ENCODE measurements at regions of chr21 and their contacts with region 1.

Region 1: GRCh38 chr21:37675202-37675801 is 241.0 kb downstream of the KCNJ6 start:
- DNase-seq: peak; percentile 29 to 96
- H3K4me3 ChIP-seq: peak overlapping the region in 2 of 4 experiments; percentile 7 to 48; a peak in 3 of 8 replicates
- H3K27ac ChIP-seq: no peak overlapping the region
- H3K4me1 ChIP-seq: peaks cover 0 to 8% (median 2%) of the 10 kb centered on the region in 4 experiments; a peak in 3 of 7 replicates
- H3K27me3 ChIP-seq: no peaks in the 10 kb centered on the region; a peak in 2 of 7 replicates
- CTCF ChIP-seq: peak; percentile 81 to 94 (median 89)
- EP300 ChIP-seq: no peak
- POLR2A ChIP-seq: no peak
- RAD21 ChIP-seq: peak; percentile 71 to 76

Region 2: DNA sequence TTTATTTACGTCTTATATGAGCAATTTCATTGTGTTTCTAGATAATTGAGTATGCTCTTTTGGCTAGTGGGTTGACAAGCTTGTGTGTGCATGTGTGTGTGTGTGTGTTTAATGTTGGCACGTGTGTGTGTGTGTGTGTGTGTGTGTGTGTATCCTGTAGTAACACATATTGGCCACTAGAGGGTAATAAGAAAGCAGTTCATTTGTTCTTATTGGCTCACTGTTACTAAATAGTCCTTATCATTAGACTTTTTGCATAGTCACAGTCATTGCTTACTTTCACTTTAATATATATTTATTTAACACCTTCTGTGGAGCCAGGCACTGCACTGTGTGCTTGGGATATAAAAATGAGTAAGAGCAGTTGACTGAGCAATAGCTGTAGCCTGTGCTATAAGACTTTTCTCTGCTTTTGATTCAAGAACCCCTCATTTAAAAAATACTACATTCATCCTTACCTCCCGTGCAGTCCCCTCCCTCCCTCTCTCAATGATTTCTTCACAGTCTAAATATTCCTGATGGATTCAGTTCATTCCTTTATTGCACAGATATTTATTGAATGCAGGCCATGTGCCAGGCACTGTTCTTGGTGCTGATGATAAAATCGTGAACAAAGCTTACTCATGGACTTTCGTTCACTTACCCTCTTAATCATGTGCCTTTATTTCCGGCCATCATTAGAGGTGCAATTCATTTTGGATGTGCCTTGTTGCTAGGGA is 212.1 kb before region 1 on chr21:
- CTCF ChIA-PET with region 1: interaction called, 10 read pairs
- POLR2A ChIA-PET with region 1: no interaction called
- DNase-seq: no peak
- H3K4me3 ChIP-seq: no peak overlapping the region
- H3K27ac ChIP-seq: no peak overlapping the region; the same call in 1 of the 2 replicates
- H3K4me1 ChIP-seq: peaks cover 3 to 8% (median 7%) of the 10 kb centered on the region in 4 experiments; a peak in 5 of 7 replicates
- H3K27me3 ChIP-seq: no peaks in the 10 kb centered on the region
- CTCF ChIP-seq: peak in 2 of 3 experiments; percentile 40 to 71; a peak in 3 of 4 replicates
- EP300 ChIP-seq: no peak
- POLR2A ChIP-seq: no peak
- RAD21 ChIP-seq: peak; percentile 38 to 51

Region 3: DNA sequence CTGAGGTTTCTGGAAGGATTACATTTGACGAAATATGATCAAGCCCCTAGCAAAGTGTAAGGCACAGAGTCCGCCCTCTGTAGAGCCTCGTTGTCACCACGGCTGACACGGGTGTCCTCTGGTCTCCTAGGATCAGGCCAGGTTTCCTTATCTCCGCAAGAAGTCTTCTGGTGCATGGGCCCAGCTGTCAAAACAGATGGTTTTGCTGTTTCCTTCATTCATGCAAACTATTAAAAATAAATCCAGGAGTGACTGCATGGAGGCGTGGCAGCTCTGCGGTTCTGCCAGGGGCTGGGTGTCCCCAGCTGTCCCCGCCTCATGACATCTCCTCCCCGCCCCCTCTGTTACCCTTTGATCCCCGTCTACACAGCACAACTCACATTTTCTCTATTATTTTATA is 99.7 kb before region 1 on chr21:
- CTCF ChIA-PET with region 1: no interaction called
- POLR2A ChIA-PET with region 1: no interaction called
- DNase-seq: no peak
- H3K4me3 ChIP-seq: no peak overlapping the region
- H3K27ac ChIP-seq: no peak overlapping the region
- H3K4me1 ChIP-seq: no peaks in the 10 kb centered on the region
- H3K27me3 ChIP-seq: no peaks in the 10 kb centered on the region
- CTCF ChIP-seq: no peak
- EP300 ChIP-seq: no peak
- POLR2A ChIP-seq: no peak
- RAD21 ChIP-seq: no peak

Region 4: DNA sequence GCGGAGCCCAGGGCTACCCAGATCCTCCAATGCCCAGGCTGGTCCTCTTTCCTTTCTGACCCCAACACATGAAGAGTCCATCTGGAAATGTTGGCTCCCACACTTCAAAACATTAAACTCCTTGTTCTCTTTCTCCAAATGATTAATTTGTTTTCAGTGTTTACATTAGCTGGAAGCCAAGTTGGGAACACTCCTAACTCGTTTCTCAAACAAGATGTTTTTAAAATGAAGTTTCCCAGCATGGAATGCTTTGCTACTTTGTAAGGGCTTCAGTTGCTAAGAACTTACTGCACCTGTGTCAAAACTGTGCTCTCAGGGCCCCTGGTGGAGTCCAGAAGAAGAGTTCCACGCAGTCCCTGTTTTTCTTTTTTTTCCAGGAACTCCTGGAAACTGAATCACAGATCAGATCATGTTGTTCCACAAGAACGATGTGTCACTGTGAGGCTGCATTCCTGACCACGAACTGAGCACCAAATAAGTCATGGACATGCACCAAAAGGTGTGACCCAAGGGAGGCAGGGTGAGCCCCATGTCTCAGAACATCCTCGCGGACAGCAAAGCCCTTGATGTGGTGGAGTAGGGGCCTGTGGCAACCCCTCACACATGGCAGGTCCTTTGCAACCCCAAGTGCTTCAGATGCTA is 16.4 kb before region 1 on chr21:
- CTCF ChIA-PET with region 1: interaction called, 11 read pairs
- POLR2A ChIA-PET with region 1: interaction called, 5 read pairs
- DNase-seq: no peak
- H3K4me3 ChIP-seq: no peak overlapping the region
- H3K27ac ChIP-seq: no peak overlapping the region
- H3K4me1 ChIP-seq: no peaks in the 10 kb centered on the region
- H3K27me3 ChIP-seq: no peaks in the 10 kb centered on the region
- CTCF ChIP-seq: no peak
- EP300 ChIP-seq: no peak
- POLR2A ChIP-seq: no peak
- RAD21 ChIP-seq: peak in 1 of 2 experiments; percentile 15; a peak in 1 of 4 replicates

Region 5: GRCh38 chr21:37686991-37687810 is 11.9 kb after region 1 on chr21:
- CTCF ChIA-PET with region 1: interaction called, 13 read pairs
- POLR2A ChIA-PET with region 1: no interaction called
- DNase-seq: no peak
- H3K4me3 ChIP-seq: no peak overlapping the region
- H3K27ac ChIP-seq: no peak overlapping the region
- H3K4me1 ChIP-seq: peaks cover 2 to 8% (median 4%) of the 10 kb centered on the region in 4 experiments; a peak in 6 of 7 replicates
- H3K27me3 ChIP-seq: no peaks in the 10 kb centered on the region
- CTCF ChIP-seq: no peak
- EP300 ChIP-seq: no peak
- POLR2A ChIP-seq: no peak
- RAD21 ChIP-seq: no peak

Region 6: DNA sequence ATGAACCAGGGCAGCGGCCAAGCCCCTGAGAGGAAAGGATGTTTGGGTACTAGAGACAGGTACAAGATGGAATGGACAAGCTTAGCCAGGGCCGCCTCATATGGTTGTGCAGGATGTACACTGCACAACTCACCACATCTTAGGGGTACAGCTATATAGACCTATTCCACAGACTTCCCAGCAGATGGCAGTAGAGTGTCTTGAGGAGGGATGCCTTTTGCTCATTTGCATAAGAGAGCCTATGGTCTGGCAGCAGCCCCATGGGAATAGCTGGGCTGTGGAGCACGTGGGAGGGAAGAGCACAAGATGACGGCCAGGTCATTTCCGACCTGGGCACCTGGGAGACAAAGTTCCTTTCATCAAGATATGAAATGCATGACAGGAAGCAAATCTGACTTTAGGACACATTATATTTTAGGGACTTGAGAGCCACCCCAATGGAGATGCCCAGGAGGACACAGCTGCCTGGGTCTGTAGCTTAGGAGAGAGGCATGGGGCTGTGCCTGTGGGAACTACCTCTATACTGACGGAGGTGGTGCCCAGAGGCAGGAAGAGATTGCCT is 25.4 kb after region 1 on chr21:
- CTCF ChIA-PET with region 1: interaction called, 13 read pairs
- POLR2A ChIA-PET with region 1: no interaction called
- DNase-seq: peak; percentile 33 to 48
- H3K4me3 ChIP-seq: no peak overlapping the region
- H3K27ac ChIP-seq: no peak overlapping the region
- H3K4me1 ChIP-seq: no peaks in the 10 kb centered on the region
- H3K27me3 ChIP-seq: 0 out of 7 replicates have a peak, but pooled peaks cover 0 to 2% (median 0%) of the 10 kb centered on the region in 4 experiments
- CTCF ChIP-seq: peak; percentile 18 to 87 (median 71)
- EP300 ChIP-seq: no peak
- POLR2A ChIP-seq: no peak
- RAD21 ChIP-seq: peak; percentile 81 to 88

Region 7: GRCh38 chr21:37724201-37724600 is 48.9 kb after region 1 on chr21:
- CTCF ChIA-PET with region 1: no interaction called
- POLR2A ChIA-PET with region 1: no interaction called
- DNase-seq: no peak
- H3K4me3 ChIP-seq: no peak overlapping the region
- H3K27ac ChIP-seq: no peak overlapping the region
- H3K4me1 ChIP-seq: no peaks in the 10 kb centered on the region
- H3K27me3 ChIP-seq: no peaks in the 10 kb centered on the region
- CTCF ChIP-seq: no peak
- EP300 ChIP-seq: no peak
- POLR2A ChIP-seq: no peak
- RAD21 ChIP-seq: no peak

Region 8: DNA sequence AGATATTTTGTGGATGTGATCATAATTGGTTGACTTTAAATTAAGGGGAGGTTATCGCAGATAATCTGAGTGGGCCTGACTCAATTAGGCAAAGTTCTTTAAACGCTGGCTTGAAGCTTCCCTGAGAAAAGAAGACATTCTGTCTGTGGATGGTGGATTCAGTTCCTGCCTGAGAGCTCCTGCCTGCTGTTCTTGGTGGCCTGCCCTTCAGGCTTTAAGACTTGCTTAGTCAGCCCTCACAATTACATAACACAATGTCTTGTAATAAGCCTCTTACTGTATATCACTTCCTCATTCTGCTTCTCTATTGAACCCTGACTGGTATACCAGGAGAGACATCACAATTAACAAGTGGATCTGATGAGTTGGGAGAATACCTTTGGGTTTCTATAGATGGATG is 190.7 kb after region 1 on chr21:
- CTCF ChIA-PET with region 1: no interaction called
- POLR2A ChIA-PET with region 1: no interaction called
- DNase-seq: no peak
- H3K4me3 ChIP-seq: no peak overlapping the region
- H3K27ac ChIP-seq: no peak overlapping the region
- H3K4me1 ChIP-seq: peaks cover 0 to 2% (median 0%) of the 10 kb centered on the region in 4 experiments; a peak in 1 of 7 replicates
- H3K27me3 ChIP-seq: no peaks in the 10 kb centered on the region
- CTCF ChIP-seq: no peak
- EP300 ChIP-seq: no peak
- POLR2A ChIP-seq: no peak
- RAD21 ChIP-seq: no peak